ENCODE measurements at regions of chr1 and their contacts with region 1.

Region 1: GRCh38 chr1:236064674-236065508 is at the start of gene NID1:
- DNase-seq: peak; percentile 91 to 95 (median 94)
- H3K4me3 ChIP-seq: peak within 1 kb of the TSS; percentile 83
- H3K27ac ChIP-seq: peak within 1 kb of the TSS; percentile 80 to 96
- H3K4me1 ChIP-seq: peaks cover 11% of the 10 kb centered on the region
- H3K27me3 ChIP-seq: no peaks in the 10 kb centered on the region
- CTCF ChIP-seq: peak in 2 of 3 donors; percentile 62 to 82
- EP300 ChIP-seq: no peak
- POLR2A ChIP-seq: peak; percentile 77
- total RNA-seq, gene NID1: 59.2 to 141 (median 72.0) TPM

Region 2: DNA sequence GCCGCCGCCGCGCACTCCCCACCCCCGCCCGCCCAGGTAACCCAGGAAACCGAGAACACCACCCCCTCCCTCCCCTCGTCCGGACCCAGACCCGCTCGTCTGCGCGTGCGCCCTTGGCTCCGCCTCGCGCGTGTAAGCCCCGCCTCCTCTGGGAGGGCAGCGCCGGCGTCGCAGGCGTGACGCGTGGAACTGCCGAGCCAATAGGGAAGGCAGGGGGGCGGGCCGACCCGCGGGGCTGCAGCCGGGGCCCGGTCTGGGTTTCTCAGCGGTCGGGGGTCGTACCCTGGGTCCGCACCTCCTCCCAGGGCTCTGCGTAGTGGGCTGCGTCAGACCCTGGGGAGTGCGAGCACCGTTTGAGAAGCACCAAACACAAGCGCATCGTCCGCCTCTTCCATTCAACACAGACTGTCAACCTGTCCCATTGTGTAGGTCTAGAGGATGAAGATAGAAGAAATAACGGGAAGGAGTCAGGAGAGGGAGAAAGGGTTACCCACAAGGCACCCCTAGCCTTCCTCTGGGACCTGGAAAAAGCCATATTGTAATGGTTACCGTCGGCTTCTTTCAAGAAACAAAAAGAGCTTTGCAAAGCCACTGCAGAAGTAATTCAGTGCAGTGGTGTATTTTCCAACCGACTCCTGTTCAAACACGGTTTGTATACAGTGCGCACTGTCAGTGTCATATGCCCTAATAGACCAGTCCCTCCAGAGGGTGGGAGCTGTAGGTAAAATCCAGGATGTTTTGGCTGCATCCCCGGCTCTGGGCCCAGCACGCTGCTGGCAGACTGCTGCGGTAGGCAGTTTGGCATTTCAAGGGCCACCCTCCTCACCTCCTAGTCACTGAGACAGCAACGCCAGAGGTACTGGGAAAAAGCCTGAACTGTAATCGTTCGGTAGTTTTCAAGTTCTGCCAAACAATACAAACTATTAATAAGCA is 197.7 kb before region 1 on chr1:
- intact Hi-C with region 1: loop called in 1 of 4 experiments (anchors 10 kb)
- DNase-seq: peak; percentile 96 to 99 (median 97)
- H3K4me3 ChIP-seq: peak overlapping the region; percentile 89
- H3K27ac ChIP-seq: peak overlapping the region; percentile 85 to 95
- H3K4me1 ChIP-seq: peaks cover 7% of the 10 kb centered on the region
- H3K27me3 ChIP-seq: no peaks in the 10 kb centered on the region
- CTCF ChIP-seq: no peak
- EP300 ChIP-seq: no peak
- POLR2A ChIP-seq: peak; percentile 68

Region 3: DNA sequence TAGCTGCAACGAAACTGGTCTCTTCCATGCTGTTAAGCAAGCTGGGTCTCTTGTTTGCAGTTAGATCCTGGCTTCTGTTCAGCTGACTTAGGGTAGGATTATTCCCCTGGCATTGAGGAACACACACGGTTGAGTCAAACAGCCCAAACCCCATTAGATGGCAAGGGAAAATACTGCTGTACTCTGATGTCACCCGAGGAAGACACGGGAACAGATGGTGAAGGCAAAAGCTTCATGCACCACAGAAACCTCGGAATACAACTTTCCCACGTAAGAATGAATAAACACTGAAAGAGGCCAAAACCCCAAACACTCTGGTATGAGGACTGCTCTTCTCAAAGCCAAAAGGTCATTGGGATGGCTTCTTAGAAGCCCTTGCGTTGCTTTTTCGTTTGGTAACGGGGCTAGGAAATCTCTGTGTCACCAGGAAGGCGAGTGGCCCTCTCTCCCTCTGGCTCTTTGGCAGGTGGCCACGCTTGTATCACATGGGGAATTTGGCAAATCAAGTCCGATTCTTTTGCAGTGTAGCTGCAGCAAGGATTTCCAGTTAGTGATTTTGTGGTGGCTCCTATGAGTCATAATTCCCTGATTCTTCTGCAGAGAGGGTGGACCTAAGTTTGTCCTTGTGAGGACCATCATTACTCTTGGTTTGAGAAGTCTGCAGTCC is 181.5 kb before region 1 on chr1:
- intact Hi-C with region 1: no loop called
- DNase-seq: peak; percentile 82 to 90 (median 87)
- H3K4me3 ChIP-seq: no peak overlapping the region
- H3K27ac ChIP-seq: peak overlapping the region; percentile 47 to 52
- H3K4me1 ChIP-seq: peaks cover 8% of the 10 kb centered on the region
- H3K27me3 ChIP-seq: no peaks in the 10 kb centered on the region
- CTCF ChIP-seq: no peak
- EP300 ChIP-seq: no peak
- POLR2A ChIP-seq: no peak

Region 4: DNA sequence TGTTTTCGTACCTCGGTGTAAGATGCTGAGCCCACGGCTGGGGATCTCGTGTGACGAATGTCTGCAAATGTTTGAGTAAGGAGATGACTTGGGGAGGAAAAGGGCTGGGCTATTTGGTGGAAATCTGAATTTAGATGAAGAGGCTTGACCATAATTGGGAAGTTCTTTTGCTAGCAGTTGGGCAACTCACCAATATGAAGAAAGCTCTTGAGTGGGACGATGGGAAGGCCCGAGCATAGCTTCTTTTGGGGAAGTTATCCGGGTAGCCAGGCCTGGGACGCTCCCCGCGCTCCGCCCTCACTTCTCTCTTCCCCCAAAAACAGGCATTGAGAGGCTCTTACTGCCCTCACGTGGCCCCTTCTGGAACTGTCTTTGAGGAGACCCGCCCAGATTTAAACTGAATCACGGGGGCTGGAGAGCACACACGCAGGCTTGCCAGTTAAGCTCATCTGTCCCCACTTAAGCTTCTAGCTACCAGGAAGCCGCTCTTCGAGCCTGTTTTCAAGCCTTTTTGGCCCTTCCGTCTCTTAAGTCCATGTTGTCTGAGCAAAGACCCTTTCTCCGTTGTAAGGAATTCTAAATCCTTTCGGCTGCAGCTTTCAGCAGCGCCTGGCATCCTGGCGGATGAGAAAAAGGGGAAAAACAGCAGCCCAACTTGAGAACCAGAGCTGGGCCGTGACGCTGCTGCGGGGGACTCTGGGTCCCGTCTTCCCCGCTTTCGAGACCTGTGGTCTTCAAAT is 93.2 kb before region 1 on chr1:
- intact Hi-C with region 1: loop called in 2 of 4 experiments (anchors 5 to 10 kb)
- DNase-seq: peak; percentile 92 to 96 (median 94)
- H3K4me3 ChIP-seq: peak overlapping the region; percentile 34
- H3K27ac ChIP-seq: peak overlapping the region; percentile 88 to 90
- H3K4me1 ChIP-seq: peaks cover 3% of the 10 kb centered on the region
- H3K27me3 ChIP-seq: no peaks in the 10 kb centered on the region
- CTCF ChIP-seq: peak; percentile 82 to 86 (median 82)
- EP300 ChIP-seq: peak; percentile 51
- POLR2A ChIP-seq: peak; percentile 75

Region 5: GRCh38 chr1:236018885-236019453 is 45.9 kb before region 1 on chr1:
- intact Hi-C with region 1: loop called in 1 of 4 experiments (anchors 2 kb)
- DNase-seq: peak; percentile 68 to 92 (median 87)
- H3K4me3 ChIP-seq: no peak overlapping the region
- H3K27ac ChIP-seq: peak overlapping the region; percentile 58 to 81
- H3K4me1 ChIP-seq: peaks cover 16% of the 10 kb centered on the region
- H3K27me3 ChIP-seq: no peaks in the 10 kb centered on the region
- CTCF ChIP-seq: no peak
- EP300 ChIP-seq: peak; percentile 88
- POLR2A ChIP-seq: peak; percentile 30

Measured in ovary (tissue), 10 donors.